Pancreas (tissue), 10 donors: ENCODE measurements at regions of chr6 and their contacts with region 1.

Region 1: GRCh38 chr6:166395356-166395755 is 12.6 kb upstream of the MPC1 start:
- DNase-seq: no peak
- ATAC-seq: no peak
- H3K4me3 ChIP-seq: no peak overlapping the region
- H3K27ac ChIP-seq: no peak overlapping the region
- H3K4me1 ChIP-seq: no peaks in the 10 kb centered on the region
- H3K27me3 ChIP-seq: no peaks in the 10 kb centered on the region
- CTCF ChIP-seq: no peak

Region 2: DNA sequence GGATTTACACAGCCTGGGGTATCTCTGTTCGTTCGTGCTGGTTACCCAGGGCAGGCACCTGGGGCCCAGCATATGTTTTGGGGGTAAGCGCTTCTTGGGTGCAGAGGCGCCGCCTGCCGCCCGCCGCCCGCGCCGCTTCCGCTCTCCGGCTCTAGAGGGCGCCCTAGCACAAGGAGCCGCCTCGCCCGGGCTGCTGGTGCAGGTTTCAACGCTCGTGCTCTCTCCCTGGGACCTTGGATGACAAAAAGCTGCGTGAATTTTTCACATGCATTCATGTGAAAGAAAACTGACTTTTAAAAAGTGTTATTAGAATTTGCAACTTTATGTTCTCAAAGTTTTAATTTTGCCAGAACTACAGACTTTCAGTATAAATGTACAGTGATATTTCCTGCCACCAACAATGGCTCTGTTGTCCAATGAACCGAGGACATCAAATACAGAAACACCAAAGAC is 119.6 kb before region 1 on chr6:
- intact Hi-C with region 1: loop called (anchors 2 to 10 kb)
- DNase-seq: peak; percentile 50 to 97 (median 80)
- ATAC-seq: peak; percentile 95 to 100 (median 98)
- H3K4me3 ChIP-seq: no peak overlapping the region
- H3K27ac ChIP-seq: no peak overlapping the region
- H3K4me1 ChIP-seq: no peaks in the 10 kb centered on the region
- H3K27me3 ChIP-seq: no peaks in the 10 kb centered on the region
- CTCF ChIP-seq: peak; percentile 97 to 99 (median 99)

Region 3: DNA sequence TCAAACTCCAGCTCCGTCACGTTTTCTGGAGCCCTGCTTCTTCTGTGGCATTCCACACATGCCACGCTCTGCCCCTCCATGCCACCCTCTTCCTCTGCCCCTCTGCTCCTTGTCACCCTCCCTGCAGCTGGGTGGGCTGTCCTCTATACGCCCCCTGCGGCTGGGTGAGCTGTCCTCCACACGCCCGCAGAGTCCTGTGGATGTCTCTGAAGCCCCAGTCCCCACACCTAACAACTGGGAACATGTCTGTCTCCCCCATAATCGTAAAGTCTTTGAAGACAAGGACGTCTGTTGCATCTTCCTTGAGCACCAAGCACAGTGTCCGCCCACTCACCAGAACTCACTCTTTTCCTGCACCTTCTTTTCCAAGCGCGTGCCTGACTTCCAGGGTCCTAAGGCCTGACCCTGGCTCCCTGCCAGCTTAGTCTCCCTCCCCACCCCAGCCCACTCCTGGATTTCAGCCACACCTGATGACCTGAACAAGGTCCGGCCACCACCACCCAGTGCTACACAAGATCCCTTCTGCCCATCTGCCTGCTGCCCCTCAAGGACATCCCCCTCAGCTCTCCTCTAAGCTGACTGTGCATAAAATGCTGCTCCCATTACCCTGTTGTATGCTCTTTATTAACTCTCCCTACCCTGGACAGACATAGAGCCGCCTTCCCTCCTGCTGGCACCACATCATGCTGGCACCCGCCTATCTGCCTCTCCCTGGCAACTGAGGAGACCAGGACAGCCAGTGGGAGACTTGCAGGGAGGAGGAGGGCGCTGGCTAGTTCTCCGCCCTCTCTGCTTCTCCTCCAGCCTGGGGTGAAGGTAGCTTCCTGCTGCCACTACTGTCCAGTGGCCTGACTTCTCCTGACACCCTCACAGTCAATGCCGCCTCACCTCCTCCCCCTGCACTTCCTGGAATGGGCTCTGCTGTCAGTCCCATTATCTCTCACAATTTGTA is 76.4 kb before region 1 on chr6:
- intact Hi-C with region 1: loop called in 1 of 3 experiments (anchors 5 kb)
- DNase-seq: no peak
- ATAC-seq: peak in 1 of 4 donors; percentile 19
- H3K4me3 ChIP-seq: no peak overlapping the region
- H3K27ac ChIP-seq: no peak overlapping the region
- H3K4me1 ChIP-seq: no peaks in the 10 kb centered on the region
- H3K27me3 ChIP-seq: no peaks in the 10 kb centered on the region
- CTCF ChIP-seq: no peak

Region 4: DNA sequence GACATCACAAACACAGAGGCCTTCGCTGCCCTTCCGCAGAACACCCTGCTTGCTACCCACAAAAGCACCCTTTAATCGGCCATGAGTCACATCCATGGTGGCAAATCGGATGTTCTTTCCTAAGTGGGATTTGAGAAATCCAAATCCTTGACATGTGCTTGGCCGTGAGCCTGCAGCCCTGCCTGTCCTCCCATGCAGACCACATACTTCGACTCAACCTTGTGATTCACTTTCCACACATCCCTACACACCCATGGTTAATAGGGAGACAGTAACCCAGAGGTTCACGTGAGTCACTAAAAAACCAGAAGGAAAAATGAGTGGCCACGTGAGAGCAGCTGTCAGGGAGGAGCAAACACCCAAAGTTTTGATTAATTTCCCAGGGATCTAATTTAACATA is 171.8 kb after region 1 on chr6:
- intact Hi-C with region 1: no loop called
- DNase-seq: no peak
- ATAC-seq: no peak
- H3K4me3 ChIP-seq: no peak overlapping the region
- H3K27ac ChIP-seq: no peak overlapping the region
- H3K4me1 ChIP-seq: no peaks in the 10 kb centered on the region
- H3K27me3 ChIP-seq: no peaks in the 10 kb centered on the region
- CTCF ChIP-seq: no peak

Region 5: GRCh38 chr6:166775180-166776081 is 380.1 kb after region 1 on chr6:
- intact Hi-C with region 1: no loop called
- DNase-seq: peak in 3 of 6 donors; percentile 26 to 52 (median 31)
- ATAC-seq: peak; percentile 55 to 89 (median 82)
- H3K4me3 ChIP-seq: no peak overlapping the region
- H3K27ac ChIP-seq: no peak overlapping the region
- H3K4me1 ChIP-seq: no peaks in the 10 kb centered on the region
- H3K27me3 ChIP-seq: no peaks in the 10 kb centered on the region
- CTCF ChIP-seq: peak; percentile 70 to 88 (median 74)